ENCODE measurements at regions of chr17 and their contacts with region 1.

Region 1: DNA sequence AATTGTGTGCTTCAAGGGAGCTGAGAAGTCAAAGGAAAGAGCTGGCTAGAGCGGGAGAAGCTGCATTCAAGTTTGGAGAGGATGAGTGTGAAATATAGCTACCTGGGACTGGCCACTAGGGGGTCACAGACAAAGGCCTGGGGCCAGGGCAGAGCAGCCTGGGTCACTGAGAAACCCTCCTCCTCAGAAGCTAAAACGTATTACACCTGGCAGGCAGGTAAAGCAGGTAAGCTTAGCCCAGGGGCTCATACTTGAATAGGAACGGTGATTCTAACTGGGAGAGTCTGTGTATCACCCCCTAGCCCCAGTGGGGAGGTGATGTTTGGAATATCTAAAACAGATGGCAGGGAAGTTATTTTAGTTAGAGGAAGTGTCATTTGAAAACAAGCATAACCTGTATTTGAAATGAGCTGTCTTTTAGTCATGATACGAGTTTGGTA is 6.8 kb downstream of the KRT37 start:
- DNase-seq: no peak
- H3K4me3 ChIP-seq: no peak overlapping the region
- H3K27ac ChIP-seq: no peak overlapping the region
- H3K4me1 ChIP-seq: peaks cover 36% of the 10 kb centered on the region
- H3K27me3 ChIP-seq: no peaks in the 10 kb centered on the region
- CTCF ChIP-seq: no peak
- EP300 ChIP-seq: no peak
- POLR2A ChIP-seq: no peak

Region 2: GRCh38 chr17:41521574-41522261 is 104.1 kb after region 1 on chr17:
- intact Hi-C with region 1: loop called in 2 of 4 experiments (anchors 10 kb)
- DNase-seq: no peak
- H3K4me3 ChIP-seq: no peak overlapping the region
- H3K27ac ChIP-seq: no peak overlapping the region
- H3K4me1 ChIP-seq: peaks cover 7% of the 10 kb centered on the region
- H3K27me3 ChIP-seq: no peaks in the 10 kb centered on the region
- CTCF ChIP-seq: no peak
- EP300 ChIP-seq: no peak
- POLR2A ChIP-seq: no peak